BJ (cell line): ENCODE measurements at regions of chr9 and their contacts with region 1.

Region 1: DNA sequence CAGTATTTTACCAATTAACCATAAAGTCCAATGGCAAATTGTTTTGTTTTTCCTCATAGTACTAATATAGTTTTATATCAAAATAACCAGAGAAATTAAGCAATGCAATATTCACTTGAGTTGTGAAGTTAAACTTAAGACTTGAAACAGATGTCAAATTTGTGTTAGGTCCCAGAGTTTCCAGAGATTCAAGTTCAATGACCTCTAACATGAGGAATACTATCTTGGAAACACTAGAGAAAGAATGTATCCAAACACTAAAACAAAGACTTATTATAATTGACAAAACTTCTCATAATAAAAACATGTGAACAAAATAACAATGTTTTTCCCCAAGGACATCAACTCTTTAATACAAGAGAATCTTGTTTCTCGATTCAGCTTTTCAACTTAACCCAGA is 18.0 kb downstream of the SUSD1 start:
- DNase-seq: no peak
- H3K4me3 ChIP-seq: no peak overlapping the region
- H3K27me3 ChIP-seq: no peaks in the 10 kb centered on the region
- CTCF ChIP-seq: no peak

Region 2: GRCh38 chr9:112112941-112113681 is 44.0 kb before region 1 on chr9:
- CTCF ChIA-PET with region 1: interaction called, 3 read pairs
- POLR2A ChIA-PET with region 1: interaction called, 16 read pairs
- DNase-seq: no peak
- H3K4me3 ChIP-seq: no peak overlapping the region
- H3K27me3 ChIP-seq: no peaks in the 10 kb centered on the region
- CTCF ChIP-seq: peak; percentile 26